Activated T-helper 1 cell treated with anti-CD3 and anti-CD28 coated beads, Interleukin-12 subunit alpha, Interleukin-12 subunit beta, Interleukin-2, Interleukin-4 antibody, amounts not matched to agents 30 ng/mL and 10 ng/mL and 1 ng/mL, durations not matched to agents 14 hours and 24 hours and 36 hours (primary cell): ENCODE measurements at regions of chr12 and their contacts with region 1.

Region 1: GRCh38 chr12:92505254-92506231 is 197.2 kb upstream of the PLEKHG7 start:
- DNase-seq: peak; percentile 13
- H3K4me3 Mint-ChIP-seq: peak overlapping the region; percentile 77
- H3K27ac Mint-ChIP-seq: peak overlapping the region; percentile 93
- H3K4me1 Mint-ChIP-seq: peaks cover 47% of the 10 kb centered on the region
- H3K27me3 Mint-ChIP-seq: no peaks in the 10 kb centered on the region

Region 2: DNA sequence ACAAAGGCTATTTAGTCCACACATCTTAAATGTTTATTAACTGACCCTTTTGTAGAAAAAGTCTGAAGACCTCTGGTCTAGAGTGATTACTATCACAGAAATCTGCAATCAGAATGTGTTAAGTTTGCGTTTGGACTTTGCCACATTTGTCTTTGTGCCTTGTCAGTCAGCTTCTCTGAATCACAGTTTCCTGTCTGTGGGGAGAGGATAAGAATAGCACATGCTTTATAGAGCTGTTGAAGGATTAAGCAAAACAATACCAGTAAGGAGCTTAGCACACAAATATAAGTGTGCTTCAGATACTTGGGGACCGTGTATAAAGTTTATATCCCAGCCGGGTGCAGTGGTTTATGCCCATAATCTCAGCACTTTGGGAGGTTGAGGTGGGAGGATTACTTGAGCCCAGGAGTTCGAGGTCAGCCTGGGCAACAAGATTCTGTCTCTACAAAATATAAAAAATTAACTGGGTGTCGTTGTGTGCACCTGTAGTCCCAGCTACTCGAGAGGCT is 296.9 kb before region 1 on chr12:
- intact Hi-C with region 1: loop called (anchors 2 kb)
- DNase-seq: peak; percentile 26
- H3K4me3 Mint-ChIP-seq: peak overlapping the region; percentile 72
- H3K27ac Mint-ChIP-seq: peak overlapping the region; percentile 94
- H3K4me1 Mint-ChIP-seq: peaks cover 46% of the 10 kb centered on the region
- H3K27me3 Mint-ChIP-seq: no peaks in the 10 kb centered on the region

Region 3: DNA sequence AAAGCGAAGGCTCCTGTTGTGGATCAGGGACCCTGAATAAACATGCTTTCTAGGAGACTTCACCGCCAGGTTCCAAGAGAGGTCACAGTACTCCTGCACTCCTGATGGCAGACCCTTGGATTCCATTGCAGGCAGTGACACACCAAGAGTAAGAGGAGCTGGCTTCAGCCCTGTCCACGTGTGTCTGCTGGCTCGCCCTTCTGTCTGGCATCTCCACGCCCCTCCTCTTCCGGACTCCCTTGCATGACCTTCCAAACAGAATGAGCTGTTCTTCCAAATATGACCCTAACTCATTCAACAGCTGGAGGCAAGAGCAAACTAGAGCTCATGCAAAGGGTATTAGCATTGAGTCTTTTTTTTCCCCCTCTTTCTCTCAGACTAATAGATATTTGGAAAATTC is 35.7 kb before region 1 on chr12:
- intact Hi-C with region 1: loop called (anchors 1 kb)
- DNase-seq: no peak
- H3K4me3 Mint-ChIP-seq: no peak overlapping the region
- H3K27ac Mint-ChIP-seq: peak overlapping the region; percentile 81
- H3K4me1 Mint-ChIP-seq: peaks cover 30% of the 10 kb centered on the region
- H3K27me3 Mint-ChIP-seq: no peaks in the 10 kb centered on the region

Region 4: GRCh38 chr12:92528097-92528496 is 22.6 kb after region 1 on chr12:
- intact Hi-C with region 1: loop called (anchors 2 kb)
- DNase-seq: no peak
- H3K4me3 Mint-ChIP-seq: no peak overlapping the region
- H3K27ac Mint-ChIP-seq: no peak overlapping the region
- H3K4me1 Mint-ChIP-seq: peaks cover 32% of the 10 kb centered on the region
- H3K27me3 Mint-ChIP-seq: no peaks in the 10 kb centered on the region

Region 5: GRCh38 chr12:92551853-92552397 is 46.4 kb after region 1 on chr12:
- intact Hi-C with region 1: loop called (anchors 1 kb)
- DNase-seq: no peak
- H3K4me3 Mint-ChIP-seq: no peak overlapping the region
- H3K27ac Mint-ChIP-seq: no peak overlapping the region
- H3K4me1 Mint-ChIP-seq: peaks cover 31% of the 10 kb centered on the region
- H3K27me3 Mint-ChIP-seq: no peaks in the 10 kb centered on the region

Region 6: GRCh38 chr12:92649511-92650227 is 144.1 kb after region 1 on chr12:
- intact Hi-C with region 1: loop called (anchors 1 kb)
- DNase-seq: peak; percentile 40
- H3K4me3 Mint-ChIP-seq: no peak overlapping the region
- H3K27ac Mint-ChIP-seq: no peak overlapping the region
- H3K4me1 Mint-ChIP-seq: peaks cover 10% of the 10 kb centered on the region
- H3K27me3 Mint-ChIP-seq: no peaks in the 10 kb centered on the region